CD14-positive monocyte (primary cell): ENCODE measurements at regions of chr18 and their contacts with region 1.

Region 1: DNA sequence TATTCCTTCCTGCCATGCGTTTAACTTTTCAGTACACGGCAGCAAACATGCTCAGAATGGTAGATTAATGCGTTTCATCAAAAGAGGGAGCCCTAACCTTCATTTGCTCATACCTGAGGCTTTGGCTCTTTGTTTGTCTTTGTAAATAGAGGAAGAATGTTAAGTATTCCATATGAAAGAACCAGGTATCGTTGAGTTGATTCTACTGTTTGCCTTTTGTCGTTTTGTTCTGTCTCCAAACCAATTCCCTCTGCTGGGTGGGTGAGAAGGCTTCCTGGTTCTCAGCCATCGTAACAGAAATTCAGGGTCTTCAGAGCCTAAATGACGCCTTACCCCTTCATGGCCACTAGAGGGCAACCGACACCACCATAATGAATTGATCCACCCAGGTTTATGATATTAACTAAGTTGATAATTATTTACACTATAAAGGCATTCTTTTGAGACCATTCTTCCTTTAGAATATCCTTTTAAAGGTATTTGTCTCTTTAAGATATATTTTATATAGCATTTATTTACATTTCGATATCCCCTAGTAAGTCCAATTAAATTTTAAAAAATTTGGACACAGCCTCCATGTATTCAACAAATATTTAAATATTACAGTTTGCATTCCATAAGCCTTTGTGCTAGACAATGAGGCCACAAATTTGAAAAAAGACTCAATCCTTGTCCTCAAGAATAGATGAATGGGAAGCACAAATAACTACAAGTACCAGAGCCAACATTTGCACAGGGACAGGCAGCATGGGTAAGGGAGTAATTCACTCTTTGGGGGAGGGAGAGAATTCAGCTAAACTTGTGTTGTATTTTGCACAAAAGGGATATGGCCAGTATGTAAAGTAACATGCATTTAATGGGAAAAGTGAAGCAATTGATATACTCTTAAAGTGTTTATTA is 48.1 kb downstream of the TIMM21 start:
- DNase-seq: peak; percentile 46 to 66 (median 66)
- H3K4me3 ChIP-seq: no peak overlapping the region
- H3K4me3 Mint-ChIP-seq: peak overlapping the region in 1 of 2 donors; percentile 78
- H3K27ac ChIP-seq: no peak overlapping the region
- H3K27ac Mint-ChIP-seq: peak overlapping the region in 1 of 7 donors; percentile 17
- H3K4me1 ChIP-seq: peaks cover 13 to 14% of the 10 kb centered on the region in 2 donors
- H3K4me1 Mint-ChIP-seq: peaks cover 21% of the 10 kb centered on the region
- H3K27me3 ChIP-seq: no peaks in the 10 kb centered on the region
- H3K27me3 Mint-ChIP-seq: peaks cover 2 to 21% (median 7%) of the 10 kb centered on the region in 3 donors
- CTCF ChIP-seq: peak; percentile 92

Region 2: GRCh38 chr18:74342416-74343043 is 146.1 kb after region 1 on chr18:
- intact Hi-C with region 1: loop called (anchors 2 to 5 kb)
- DNase-seq: peak; percentile 25 to 40 (median 40)
- H3K4me3 ChIP-seq: no peak overlapping the region
- H3K4me3 Mint-ChIP-seq: no peak overlapping the region
- H3K27ac ChIP-seq: no peak overlapping the region
- H3K27ac Mint-ChIP-seq: no peak overlapping the region
- H3K4me1 ChIP-seq: no peaks in the 10 kb centered on the region
- H3K4me1 Mint-ChIP-seq: no peaks in the 10 kb centered on the region
- H3K27me3 ChIP-seq: peaks cover 2 to 4% of the 10 kb centered on the region in 2 donors
- H3K27me3 Mint-ChIP-seq: peaks cover 0 to 4% (median 2%) of the 10 kb centered on the region in 3 donors
- CTCF ChIP-seq: peak; percentile 81

Region 3: DNA sequence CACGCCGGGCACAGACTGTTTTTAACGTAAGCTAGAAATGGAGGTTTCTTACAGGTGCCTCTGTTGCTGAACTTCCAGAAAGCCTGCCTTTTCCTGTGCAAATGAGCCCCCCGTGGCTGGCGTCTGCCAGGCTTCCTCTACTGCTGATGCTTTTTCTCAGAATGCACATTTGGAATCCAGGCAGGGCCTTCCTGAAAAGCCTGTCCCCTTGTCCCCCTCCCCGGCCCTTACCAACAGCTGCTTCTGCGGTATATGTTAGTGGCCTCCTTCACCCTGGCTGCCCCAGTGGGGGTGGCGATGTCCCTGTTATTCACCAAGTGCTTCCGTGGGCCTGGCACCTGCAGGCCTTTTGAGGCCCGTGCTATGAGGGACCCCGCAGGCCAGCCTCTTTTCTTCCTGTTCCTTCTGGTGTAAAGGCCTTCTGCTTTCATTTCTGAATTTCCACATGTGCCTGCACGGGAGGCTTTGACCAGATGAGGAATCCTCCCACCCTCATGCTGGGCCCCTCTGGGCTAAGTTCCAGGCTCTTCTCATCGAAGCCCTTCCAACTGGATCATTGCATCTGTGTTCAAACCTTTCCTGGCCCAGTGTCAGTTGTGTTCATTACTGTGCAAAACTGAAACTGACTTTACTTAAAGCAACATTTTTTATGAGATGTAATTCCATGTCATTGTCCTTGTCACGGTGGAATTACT is 310.1 kb after region 1 on chr18:
- intact Hi-C with region 1: no loop called
- DNase-seq: no peak
- H3K4me3 ChIP-seq: no peak overlapping the region
- H3K4me3 Mint-ChIP-seq: no peak overlapping the region
- H3K27ac ChIP-seq: peak overlapping the region; percentile 38 to 60
- H3K27ac Mint-ChIP-seq: peak overlapping the region in 5 of 7 donors; percentile 47 to 85 (median 74)
- H3K4me1 ChIP-seq: peaks cover 7 to 14% of the 10 kb centered on the region in 2 donors
- H3K4me1 Mint-ChIP-seq: peaks cover 24% of the 10 kb centered on the region
- H3K27me3 ChIP-seq: no peaks in the 10 kb centered on the region
- H3K27me3 Mint-ChIP-seq: peaks cover 0 to 1% (median 0%) of the 10 kb centered on the region in 3 donors
- CTCF ChIP-seq: no peak

Region 4: DNA sequence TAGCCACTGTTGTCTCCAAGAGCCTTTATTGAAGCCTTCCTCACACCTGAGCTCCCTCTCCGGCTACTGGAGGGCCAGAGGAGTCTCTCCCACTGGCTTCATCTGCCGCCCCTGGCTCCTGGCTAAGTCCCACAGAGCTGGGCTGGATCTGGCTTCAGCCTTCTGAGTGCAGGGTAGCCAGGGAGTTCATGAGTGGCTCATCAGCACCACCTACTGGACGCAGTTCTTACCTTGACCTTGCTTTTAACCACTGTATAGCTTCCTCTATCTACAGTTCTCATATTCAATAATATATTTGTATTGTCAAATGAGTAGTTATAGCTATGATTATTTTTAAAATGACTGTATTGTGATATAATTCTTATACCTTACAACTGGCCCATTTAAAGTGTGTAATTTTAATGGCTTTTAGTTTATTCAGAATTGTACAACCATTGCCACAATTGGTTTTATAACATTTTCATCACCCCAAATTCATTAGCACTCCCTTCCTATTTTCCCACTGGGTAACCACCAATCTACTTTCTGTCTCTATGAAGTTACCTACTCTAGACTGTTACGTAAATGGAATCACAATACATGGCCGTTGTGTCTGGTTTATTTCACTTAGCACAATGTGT is 355.6 kb after region 1 on chr18:
- intact Hi-C with region 1: loop called (anchors 5 kb)
- DNase-seq: peak; percentile 74 to 85 (median 80)
- H3K4me3 ChIP-seq: no peak overlapping the region
- H3K4me3 Mint-ChIP-seq: no peak overlapping the region
- H3K27ac ChIP-seq: no peak overlapping the region
- H3K27ac Mint-ChIP-seq: no peak overlapping the region
- H3K4me1 ChIP-seq: no peaks in the 10 kb centered on the region
- H3K4me1 Mint-ChIP-seq: peaks cover 1% of the 10 kb centered on the region
- H3K27me3 ChIP-seq: no peaks in the 10 kb centered on the region
- H3K27me3 Mint-ChIP-seq: peaks cover 6 to 9% (median 6%) of the 10 kb centered on the region in 3 donors
- CTCF ChIP-seq: peak; percentile 92